Prostate gland (tissue), 2 donors: ENCODE measurements at regions of chr6 and their contacts with region 1.

Region 1: GRCh38 chr6:148464319-148465010 is 121.8 kb downstream of the SASH1 start:
- DNase-seq: peak; percentile 47
- H3K4me3 ChIP-seq: no peak overlapping the region
- H3K27ac ChIP-seq: no peak overlapping the region
- H3K4me1 ChIP-seq: no peaks in the 10 kb centered on the region
- H3K27me3 ChIP-seq: no peaks in the 10 kb centered on the region
- CTCF ChIP-seq: peak; percentile 86 to 91 (median 88)
- POLR2A ChIP-seq: no peak

Region 2: DNA sequence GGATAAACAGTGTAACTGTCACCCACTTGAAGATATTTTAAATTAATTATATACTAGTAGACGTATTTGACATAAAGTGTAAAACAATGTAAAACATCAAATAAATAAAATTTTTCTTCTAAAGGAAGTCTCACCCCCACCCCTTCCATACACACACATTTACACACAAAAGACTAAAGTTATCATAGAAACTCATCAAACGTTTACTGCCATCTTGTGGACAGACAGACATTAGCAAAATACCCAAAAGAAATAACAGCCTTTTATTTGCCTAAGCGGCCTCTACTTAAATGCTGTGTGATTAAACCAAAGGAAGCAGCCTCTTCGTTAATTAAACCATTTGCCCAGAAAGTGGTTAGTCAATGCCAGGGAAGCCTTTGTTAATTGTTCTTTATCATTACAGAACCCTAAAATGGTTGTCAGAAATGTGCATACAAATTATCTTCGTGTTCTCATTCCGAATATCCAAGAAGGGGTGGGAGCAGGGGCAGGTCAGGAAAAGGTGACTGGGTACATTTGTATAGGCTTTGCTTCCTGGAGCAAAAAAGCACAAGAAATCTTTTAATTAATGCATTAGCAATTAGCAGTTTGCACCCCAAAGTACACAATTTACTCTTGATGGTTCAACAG is 298.0 kb before region 1 on chr6:
- intact Hi-C with region 1: no loop called
- DNase-seq: peak; percentile 22
- H3K4me3 ChIP-seq: no peak overlapping the region
- H3K27ac ChIP-seq: no peak overlapping the region
- H3K4me1 ChIP-seq: no peaks in the 10 kb centered on the region
- H3K27me3 ChIP-seq: no peaks in the 10 kb centered on the region
- CTCF ChIP-seq: peak; percentile 27 to 82 (median 74)
- POLR2A ChIP-seq: no peak

Region 3: GRCh38 chr6:148177589-148178233 is 286.8 kb before region 1 on chr6:
- intact Hi-C with region 1: loop called (anchors 1 kb)
- DNase-seq: peak; percentile 52
- H3K4me3 ChIP-seq: no peak overlapping the region
- H3K27ac ChIP-seq: no peak overlapping the region
- H3K4me1 ChIP-seq: no peaks in the 10 kb centered on the region
- H3K27me3 ChIP-seq: no peaks in the 10 kb centered on the region
- CTCF ChIP-seq: peak; percentile 80 to 94 (median 85)
- POLR2A ChIP-seq: no peak